ENCODE measurements at regions of chr2 and their contacts with region 1.

Region 1: GRCh38 chr2:56009758-56010458 is 86.3 kb upstream of the EFEMP1 start:
- DNase-seq: peak; percentile 81
- H3K4me3 ChIP-seq: no peak overlapping the region
- H3K27ac ChIP-seq: peak overlapping the region; percentile 100
- H3K4me1 ChIP-seq: peaks cover 73% of the 10 kb centered on the region
- H3K27me3 ChIP-seq: no peaks in the 10 kb centered on the region
- CTCF ChIP-seq: peak; percentile 37
- POLR2A ChIP-seq: no peak

Region 2: DNA sequence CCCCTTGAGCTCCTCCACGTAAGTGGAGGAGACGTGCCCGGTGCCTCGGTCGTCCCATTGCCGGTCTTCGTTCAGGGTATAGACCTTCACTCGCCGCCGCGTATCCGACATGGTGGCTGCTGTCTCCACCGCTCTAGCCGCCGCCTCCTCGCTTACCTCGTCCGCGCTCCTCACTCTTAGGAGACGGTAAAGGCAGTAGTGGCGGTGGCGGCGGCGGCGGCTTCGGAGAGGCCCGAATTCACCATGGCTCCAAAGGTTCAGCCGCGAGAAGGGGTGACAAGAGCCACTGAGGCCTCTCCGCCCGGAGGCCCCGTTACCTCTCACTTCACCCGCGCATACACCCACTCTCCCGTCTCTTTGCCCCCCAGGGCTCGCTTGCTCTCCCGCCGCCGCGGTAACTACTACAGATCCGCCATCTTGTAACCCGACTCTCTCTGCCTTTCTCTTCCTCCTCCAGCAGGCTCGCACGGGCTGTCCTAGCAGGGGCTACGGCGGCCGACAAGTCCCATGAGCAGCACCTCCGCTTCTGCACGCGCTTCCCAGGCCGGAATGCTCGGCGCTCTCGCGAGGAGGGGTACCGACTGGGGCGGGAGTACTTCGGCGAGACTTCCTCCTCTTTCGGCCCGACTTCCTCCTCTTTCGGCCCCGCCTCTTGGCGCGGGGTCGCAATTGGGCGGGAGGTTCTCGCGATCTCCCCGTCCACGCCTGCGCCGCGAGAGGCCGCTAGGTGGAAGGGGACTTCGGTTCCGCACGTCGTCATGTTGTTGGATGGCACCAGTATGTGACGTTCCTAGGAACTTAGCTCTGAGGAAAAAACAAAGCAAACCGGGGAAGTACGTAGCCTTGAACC is 392.5 kb before region 1 on chr2 and contains the start of gene PPP4R3B:
- CTCF ChIA-PET with region 1: no interaction called
- POLR2A ChIA-PET with region 1: no interaction called
- dilution Hi-C with region 1: no loop called
- intact Hi-C with region 1: loop called (anchors 2 kb)
- DNase-seq: peak; percentile 100
- H3K4me3 ChIP-seq: peak within 1 kb of the TSS; percentile 64 to 98 (median 97)
- H3K27ac ChIP-seq: peak within 1 kb of the TSS; percentile 87
- H3K4me1 ChIP-seq: peaks cover 24% of the 10 kb centered on the region
- H3K27me3 ChIP-seq: no peaks in the 10 kb centered on the region
- CTCF ChIP-seq: peak; percentile 26 to 52
- POLR2A ChIP-seq: peak; percentile 59
- total RNA-seq, gene PPP4R3B: 49.0 and 51.5 TPM in 2 replicates

Region 3: GRCh38 chr2:55771612-55772011 is 238.3 kb before region 1 on chr2:
- CTCF ChIA-PET with region 1: interaction called, 24 read pairs
- POLR2A ChIA-PET with region 1: no interaction called
- dilution Hi-C with region 1: no loop called
- intact Hi-C with region 1: loop called (anchors 1 kb)
- DNase-seq: peak; percentile 66
- H3K4me3 ChIP-seq: no peak overlapping the region
- H3K27ac ChIP-seq: peak overlapping the region; percentile 52
- H3K4me1 ChIP-seq: peaks cover 15% of the 10 kb centered on the region
- H3K27me3 ChIP-seq: no peaks in the 10 kb centered on the region
- CTCF ChIP-seq: peak; percentile 32 to 35
- POLR2A ChIP-seq: no peak

Region 4: DNA sequence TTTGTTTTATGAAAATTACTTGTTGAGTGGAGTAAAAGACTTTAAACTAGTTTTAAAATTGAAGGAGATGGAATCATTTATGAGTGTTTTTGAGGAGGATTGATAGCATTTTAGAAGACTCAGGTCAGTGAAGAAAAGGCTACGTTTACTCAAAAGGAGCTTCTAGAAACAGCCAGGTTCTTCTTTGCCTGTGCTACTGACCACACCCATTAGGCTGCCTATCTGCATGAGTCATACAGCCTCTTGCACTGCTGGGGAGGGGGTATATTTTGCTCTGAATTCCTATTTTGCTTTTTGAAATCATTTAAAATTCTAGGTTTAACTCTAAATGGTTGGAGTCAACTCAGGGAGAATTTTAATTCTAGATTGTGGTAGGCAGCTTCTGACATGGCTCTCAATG is 108.6 kb before region 1 on chr2:
- CTCF ChIA-PET with region 1: interaction called, 15 read pairs
- POLR2A ChIA-PET with region 1: interaction called, 3 read pairs
- dilution Hi-C with region 1: no loop called
- intact Hi-C with region 1: no loop called
- DNase-seq: peak; percentile 50
- H3K4me3 ChIP-seq: no peak overlapping the region
- H3K27ac ChIP-seq: peak overlapping the region; percentile 49
- H3K4me1 ChIP-seq: peaks cover 70% of the 10 kb centered on the region
- H3K27me3 ChIP-seq: no peaks in the 10 kb centered on the region
- CTCF ChIP-seq: no peak
- POLR2A ChIP-seq: peak; percentile 19

Region 5: GRCh38 chr2:55961318-55961911 is 48.5 kb before region 1 on chr2:
- CTCF ChIA-PET with region 1: interaction called, 46 read pairs
- POLR2A ChIA-PET with region 1: interaction called, 11 read pairs
- dilution Hi-C with region 1: no loop called
- intact Hi-C with region 1: loop called (anchors 1 kb)
- DNase-seq: peak; percentile 86
- H3K4me3 ChIP-seq: no peak overlapping the region
- H3K27ac ChIP-seq: peak overlapping the region; percentile 86
- H3K4me1 ChIP-seq: peaks cover 38% of the 10 kb centered on the region
- H3K27me3 ChIP-seq: no peaks in the 10 kb centered on the region
- CTCF ChIP-seq: peak; percentile 49 to 56
- POLR2A ChIP-seq: peak; percentile 55

Region 6: DNA sequence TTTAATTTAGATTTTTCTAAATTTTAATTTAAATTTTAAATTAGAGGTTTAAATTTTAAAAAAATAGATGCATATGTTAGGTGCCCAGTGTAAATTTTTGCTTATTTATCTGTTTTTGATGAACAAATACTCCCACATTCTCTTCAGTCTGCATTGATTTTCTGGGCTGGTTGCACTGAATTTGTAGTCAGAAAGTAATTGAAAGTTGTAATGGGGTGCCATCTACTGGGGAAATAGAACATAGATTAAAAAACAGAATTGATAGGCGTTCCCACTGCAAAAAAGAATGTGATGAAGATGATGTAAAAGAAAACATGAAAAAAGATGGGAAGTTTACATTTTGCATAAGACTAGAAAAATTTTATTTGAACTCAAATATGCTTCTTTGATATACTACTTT is 122.2 kb after region 1 on chr2:
- CTCF ChIA-PET with region 1: interaction called, 15 read pairs
- POLR2A ChIA-PET with region 1: no interaction called
- dilution Hi-C with region 1: no loop called
- intact Hi-C with region 1: loop called (anchors 1 kb)
- DNase-seq: peak; percentile 76
- H3K4me3 ChIP-seq: no peak overlapping the region
- H3K27ac ChIP-seq: no peak overlapping the region
- H3K4me1 ChIP-seq: peaks cover 12% of the 10 kb centered on the region
- H3K27me3 ChIP-seq: no peaks in the 10 kb centered on the region
- CTCF ChIP-seq: peak; percentile 30
- POLR2A ChIP-seq: no peak

Region 7: GRCh38 chr2:56167616-56168562 is 158.0 kb after region 1 on chr2:
- CTCF ChIA-PET with region 1: no interaction called
- POLR2A ChIA-PET with region 1: no interaction called
- dilution Hi-C with region 1: no loop called
- intact Hi-C with region 1: no loop called
- DNase-seq: no peak
- H3K4me3 ChIP-seq: no peak overlapping the region
- H3K27ac ChIP-seq: no peak overlapping the region
- H3K4me1 ChIP-seq: no peaks in the 10 kb centered on the region
- H3K27me3 ChIP-seq: peaks cover 3 to 17% of the 10 kb centered on the region in 2 experiments
- CTCF ChIP-seq: no peak
- POLR2A ChIP-seq: no peak

Region 8: GRCh38 chr2:56299171-56299691 is 289.3 kb after region 1 on chr2:
- CTCF ChIA-PET with region 1: no interaction called
- POLR2A ChIA-PET with region 1: no interaction called
- dilution Hi-C with region 1: no loop called
- intact Hi-C with region 1: no loop called
- DNase-seq: peak; percentile 23
- H3K4me3 ChIP-seq: no peak overlapping the region
- H3K27ac ChIP-seq: no peak overlapping the region
- H3K4me1 ChIP-seq: no peaks in the 10 kb centered on the region
- H3K27me3 ChIP-seq: no peaks in the 10 kb centered on the region
- CTCF ChIP-seq: no peak
- POLR2A ChIP-seq: no peak